ENCODE measurements at regions of chr12 and their contacts with region 1.

Region 1: GRCh38 chr12:124863416-124864325 is at the start of gene SCARB1:
- DNase-seq: peak; percentile 92
- ATAC-seq: peak; percentile 94
- total RNA-seq, gene SCARB1: 14.1 TPM

Region 2: GRCh38 chr12:124675881-124676715 is 187.6 kb before region 1 on chr12:
- intact Hi-C with region 1: no loop called
- DNase-seq: no peak
- ATAC-seq: peak; percentile 35

Region 3: GRCh38 chr12:124709722-124710677 is 153.7 kb before region 1 on chr12:
- intact Hi-C with region 1: no loop called
- DNase-seq: no peak
- ATAC-seq: no peak

Region 4: GRCh38 chr12:124906606-124907261 is 43.1 kb after region 1 on chr12:
- intact Hi-C with region 1: loop called (anchors 5 kb)
- DNase-seq: no peak
- ATAC-seq: peak; percentile 60